Spleen (tissue), 13 donors: ENCODE measurements at regions of chr16 and their contacts with region 1.

Region 1: GRCh38 chr16:29700253-29700987 is 21.4 kb downstream of the QPRT start:
- DNase-seq: peak; percentile 90
- H3K4me3 ChIP-seq: peak overlapping the region in 1 of 8 donors; percentile 20
- H3K27ac ChIP-seq: peak overlapping the region in 3 of 8 donors; percentile 77 to 88 (median 82)
- H3K4me1 ChIP-seq: peaks cover 9 to 37% (median 31%) of the 10 kb centered on the region in 6 donors
- H3K27me3 ChIP-seq: no peaks in the 10 kb centered on the region
- CTCF ChIP-seq: peak; percentile 56 to 94 (median 83)
- POLR2A ChIP-seq: no peak

Region 2: DNA sequence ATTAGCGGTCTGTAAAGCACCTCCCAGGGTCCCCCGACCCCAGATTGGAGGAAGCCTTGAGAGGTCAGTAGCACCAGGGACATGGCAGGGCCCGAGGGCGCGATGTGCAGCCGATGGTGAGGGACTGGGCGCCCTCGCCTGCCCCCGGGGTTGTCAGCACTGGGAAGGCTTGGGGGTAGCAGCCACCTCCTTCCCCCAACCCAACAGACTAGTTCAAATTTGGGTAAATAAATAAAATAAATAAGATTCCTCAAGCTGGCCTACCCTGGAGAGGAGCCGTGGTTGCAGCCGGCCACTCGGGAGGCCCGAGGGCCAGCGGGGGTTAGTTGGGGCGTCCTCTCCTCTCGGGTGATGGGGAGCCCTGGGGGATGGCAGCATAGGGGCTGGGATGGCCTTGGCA is 324.0 kb after region 1 on chr16:
- intact Hi-C with region 1: loop called (anchors 5 kb)
- DNase-seq: no peak
- H3K4me3 ChIP-seq: no peak overlapping the region
- H3K27ac ChIP-seq: no peak overlapping the region
- H3K4me1 ChIP-seq: peaks cover 0 to 18% (median 15%) of the 10 kb centered on the region in 6 donors
- H3K27me3 ChIP-seq: peaks cover 0 to 57% (median 15%) of the 10 kb centered on the region in 7 donors
- CTCF ChIP-seq: no peak
- POLR2A ChIP-seq: no peak